ENCODE measurements at regions of chr3 and their contacts with region 1.

Region 1: GRCh38 chr3:128922804-128923459 is 43.5 kb downstream of the ACAD9 start:
- DNase-seq: peak; percentile 6 to 79 (median 50)
- H3K4me3 ChIP-seq: peak overlapping the region; percentile 60
- H3K4me3 Mint-ChIP-seq: peak overlapping the region; percentile 74 to 92 (median 84)
- H3K27ac ChIP-seq: no peak overlapping the region
- H3K27ac Mint-ChIP-seq: peak overlapping the region; percentile 74 to 97 (median 90)
- H3K4me1 ChIP-seq: peaks cover 23% of the 10 kb centered on the region
- H3K4me1 Mint-ChIP-seq: peaks cover 24 to 35% (median 28%) of the 10 kb centered on the region in 3 donors
- H3K27me3 ChIP-seq: no peaks in the 10 kb centered on the region
- H3K27me3 Mint-ChIP-seq: no peaks in the 10 kb centered on the region

Region 2: GRCh38 chr3:128879125-128879969 is 43.6 kb before region 1 on chr3 and contains the start of gene ACAD9:
- CTCF ChIA-PET with region 1: interaction called, 25 read pairs
- POLR2A ChIA-PET with region 1: interaction called, 6 read pairs
- DNase-seq: peak; percentile 94 to 99 (median 96)
- H3K4me3 ChIP-seq: peak within 1 kb of the TSS; percentile 84
- H3K4me3 Mint-ChIP-seq: peak within 1 kb of the TSS; percentile 84 to 97 (median 87)
- H3K27ac ChIP-seq: peak within 1 kb of the TSS; percentile 93
- H3K27ac Mint-ChIP-seq: peak within 1 kb of the TSS; percentile 96 to 100 (median 98)
- H3K4me1 ChIP-seq: peaks cover 40% of the 10 kb centered on the region
- H3K4me1 Mint-ChIP-seq: peaks cover 51 to 74% (median 70%) of the 10 kb centered on the region in 3 donors
- H3K27me3 ChIP-seq: no peaks in the 10 kb centered on the region
- H3K27me3 Mint-ChIP-seq: no peaks in the 10 kb centered on the region
- total RNA-seq, gene ACAD9: 50.5 to 51.2 TPM

Measured in CD8-positive, alpha-beta memory T cell (primary cell).